Right ventricle myocardium inferior (tissue), 1 donor: ENCODE measurements at regions of chr9 and their contacts with region 1.

Region 1: DNA sequence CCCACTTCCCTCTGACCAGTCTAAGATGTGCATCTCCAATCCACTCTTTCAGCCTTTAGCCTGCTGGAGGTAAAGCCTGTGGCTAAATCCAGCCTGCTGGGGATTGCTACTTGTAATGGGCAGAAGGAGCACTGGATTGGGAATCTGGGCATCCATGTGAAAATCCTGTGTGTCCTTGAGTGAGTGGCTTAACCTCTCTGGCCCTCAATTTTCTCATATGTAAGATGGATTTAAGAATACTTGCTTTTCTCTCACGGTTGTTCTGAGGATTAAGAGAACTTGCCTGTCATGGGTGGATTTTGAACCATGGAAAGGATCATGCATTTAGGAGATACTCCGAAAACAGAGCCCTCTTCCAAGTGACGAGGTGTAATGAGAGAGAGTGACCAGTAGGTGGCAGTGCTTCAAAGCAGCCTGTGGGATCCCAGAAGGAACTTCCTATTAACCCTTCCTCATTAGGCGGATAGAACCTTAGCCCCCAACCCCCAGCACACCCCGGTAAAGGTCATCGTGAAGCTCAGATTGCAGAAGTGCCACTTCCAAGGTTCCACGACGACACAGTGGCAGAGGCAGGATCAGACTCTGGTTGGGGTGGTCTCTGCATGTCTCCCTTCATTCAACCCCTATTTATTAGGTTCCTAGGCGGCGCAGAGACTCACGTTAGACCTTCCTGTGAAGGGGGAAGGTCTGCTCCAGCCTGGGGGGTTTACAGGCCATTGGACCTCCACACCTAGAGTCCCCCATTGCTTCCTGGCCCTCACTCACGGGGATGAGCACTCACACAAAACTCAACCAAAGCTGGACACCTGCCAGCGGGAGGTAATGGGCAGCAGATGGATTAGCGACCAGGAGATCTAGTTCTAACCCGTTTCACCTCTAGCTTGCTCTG is 68.7 kb upstream of the ZNF618 start:
- DNase-seq: no peak
- ATAC-seq: peak; percentile 79

Region 2: DNA sequence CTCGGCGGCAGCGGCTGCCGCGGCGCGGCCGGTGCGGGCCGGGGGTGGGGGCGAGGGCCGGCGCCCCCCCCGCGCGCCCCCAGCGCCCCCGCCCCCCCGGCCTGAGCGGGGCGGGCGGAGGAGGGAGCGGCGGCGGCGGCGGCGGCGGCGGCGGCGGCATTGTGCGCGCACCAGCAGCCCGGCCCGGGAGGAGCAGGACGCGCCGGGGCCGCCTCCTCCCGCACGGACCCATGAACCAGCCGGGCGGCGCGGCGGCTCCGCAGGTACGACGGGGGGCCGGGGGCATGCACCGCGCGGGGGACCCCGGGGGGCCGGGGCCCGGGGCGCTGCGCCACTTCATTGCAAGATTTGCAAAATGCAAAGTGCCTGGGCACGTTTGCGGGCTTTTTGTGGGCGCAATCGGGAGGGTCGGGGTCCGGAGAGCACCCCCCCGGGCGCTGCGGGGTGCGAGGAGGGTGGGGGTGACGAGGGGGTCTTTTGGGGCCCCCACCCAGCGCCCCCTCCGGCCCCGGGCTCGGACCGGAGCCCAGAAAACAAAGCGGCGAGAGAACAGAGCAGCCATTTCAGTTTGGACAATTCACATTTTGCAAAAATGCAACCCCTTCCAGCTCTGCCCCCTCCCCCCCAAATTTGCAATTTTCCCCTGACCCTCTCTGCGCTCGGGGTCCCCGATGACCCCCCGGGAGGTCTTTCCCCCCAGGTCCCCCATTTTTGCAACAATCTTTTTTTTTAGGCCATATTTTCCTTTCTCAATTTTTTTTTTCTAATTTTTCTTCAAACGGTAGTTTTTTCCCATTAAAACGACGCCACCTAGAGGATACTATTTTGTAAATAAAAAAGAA is 69.0 kb after region 1 on chr9 and contains the start of gene ZNF618:
- intact Hi-C with region 1: loop called (anchors 10 kb)
- DNase-seq: peak; percentile 71
- ATAC-seq: peak; percentile 71
- total RNA-seq, gene ZNF618: 1.6 TPM

Region 3: DNA sequence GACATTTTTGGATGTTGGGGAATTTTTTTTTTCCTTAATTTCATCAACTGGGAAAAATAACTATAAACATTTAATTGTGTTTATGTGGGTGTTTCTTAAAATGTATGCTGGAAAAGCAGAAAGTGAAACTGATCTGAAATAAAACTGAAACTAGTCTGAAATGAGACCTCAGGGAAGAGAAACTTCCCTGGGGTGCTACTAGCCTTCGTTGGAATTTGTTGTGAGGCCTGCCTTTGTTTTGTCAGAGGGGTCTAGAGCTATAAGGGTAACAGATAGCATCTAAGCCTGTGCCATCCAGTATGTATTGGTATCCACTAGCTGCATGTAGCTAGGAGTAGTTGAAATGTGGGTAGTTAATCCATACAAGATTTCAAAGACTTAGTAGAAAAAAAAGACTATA is 79.0 kb after region 1 on chr9:
- intact Hi-C with region 1: no loop called
- DNase-seq: no peak
- ATAC-seq: no peak